Naive thymus-derived CD4-positive, alpha-beta T cell (primary cell): ENCODE measurements at regions of chr6 and their contacts with region 1.

Region 1: DNA sequence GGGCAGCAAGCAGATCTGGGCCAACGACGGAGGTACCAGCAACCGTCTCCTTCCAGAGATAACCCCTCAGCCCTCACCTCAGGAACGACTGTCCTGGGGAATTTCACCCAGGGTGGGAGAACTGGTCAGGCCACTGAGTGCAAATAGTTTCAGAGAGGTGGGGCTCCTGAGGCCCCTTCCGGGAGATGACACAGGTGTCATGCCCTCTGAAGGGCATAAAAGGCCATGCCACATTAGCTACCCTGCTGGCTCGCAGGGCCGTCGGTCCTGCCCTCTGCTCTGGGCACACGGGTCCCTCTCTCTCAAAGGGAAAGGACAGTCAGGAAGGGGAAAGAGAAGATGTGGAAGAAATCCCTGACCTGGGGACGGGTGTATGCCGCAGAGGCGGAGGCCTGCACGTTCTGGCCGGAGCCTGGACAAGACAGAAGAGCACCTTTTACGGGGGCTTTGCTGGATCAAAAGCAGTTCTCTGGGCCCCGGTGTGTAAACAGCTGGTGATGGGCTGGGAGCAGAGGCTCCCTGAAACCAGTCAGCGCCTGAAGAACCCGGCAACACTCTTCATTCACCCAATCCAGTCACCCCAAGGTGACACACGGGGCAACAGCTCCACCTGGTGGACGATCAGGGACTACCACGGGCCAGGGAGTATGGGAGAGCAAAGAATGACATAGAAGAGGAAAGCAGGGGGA is 6.4 kb upstream of the TAF8 start:
- DNase-seq: peak; percentile 85 to 95 (median 91)
- ATAC-seq: peak; percentile 67
- H3K4me3 ChIP-seq: peak overlapping the region; percentile 59
- H3K4me3 Mint-ChIP-seq: peak overlapping the region; percentile 84 to 99 (median 95)
- H3K27ac ChIP-seq: peak overlapping the region; percentile 76
- H3K27ac Mint-ChIP-seq: peak overlapping the region; percentile 73 to 98 (median 94)
- H3K4me1 ChIP-seq: peaks cover 55 to 64% of the 10 kb centered on the region in 2 donors
- H3K4me1 Mint-ChIP-seq: peaks cover 53 to 89% (median 64%) of the 10 kb centered on the region in 7 donors
- H3K27me3 ChIP-seq: no peaks in the 10 kb centered on the region
- H3K27me3 Mint-ChIP-seq: no peaks in the 10 kb centered on the region

Region 2: GRCh38 chr6:40210628-40211056 is 1833.3 kb before region 1 on chr6:
- CTCF ChIA-PET with region 1: no interaction called
- POLR2A ChIA-PET with region 1: no interaction called
- intact Hi-C with region 1: no loop called
- DNase-seq: no peak
- ATAC-seq: no peak
- H3K4me3 ChIP-seq: no peak overlapping the region
- H3K4me3 Mint-ChIP-seq: no peak overlapping the region
- H3K27ac ChIP-seq: no peak overlapping the region
- H3K27ac Mint-ChIP-seq: no peak overlapping the region
- H3K4me1 ChIP-seq: no peaks in the 10 kb centered on the region
- H3K4me1 Mint-ChIP-seq: no peaks in the 10 kb centered on the region
- H3K27me3 ChIP-seq: peaks cover 0 to 5% of the 10 kb centered on the region in 2 donors
- H3K27me3 Mint-ChIP-seq: peaks cover 0 to 44% (median 28%) of the 10 kb centered on the region in 5 donors

Region 3: DNA sequence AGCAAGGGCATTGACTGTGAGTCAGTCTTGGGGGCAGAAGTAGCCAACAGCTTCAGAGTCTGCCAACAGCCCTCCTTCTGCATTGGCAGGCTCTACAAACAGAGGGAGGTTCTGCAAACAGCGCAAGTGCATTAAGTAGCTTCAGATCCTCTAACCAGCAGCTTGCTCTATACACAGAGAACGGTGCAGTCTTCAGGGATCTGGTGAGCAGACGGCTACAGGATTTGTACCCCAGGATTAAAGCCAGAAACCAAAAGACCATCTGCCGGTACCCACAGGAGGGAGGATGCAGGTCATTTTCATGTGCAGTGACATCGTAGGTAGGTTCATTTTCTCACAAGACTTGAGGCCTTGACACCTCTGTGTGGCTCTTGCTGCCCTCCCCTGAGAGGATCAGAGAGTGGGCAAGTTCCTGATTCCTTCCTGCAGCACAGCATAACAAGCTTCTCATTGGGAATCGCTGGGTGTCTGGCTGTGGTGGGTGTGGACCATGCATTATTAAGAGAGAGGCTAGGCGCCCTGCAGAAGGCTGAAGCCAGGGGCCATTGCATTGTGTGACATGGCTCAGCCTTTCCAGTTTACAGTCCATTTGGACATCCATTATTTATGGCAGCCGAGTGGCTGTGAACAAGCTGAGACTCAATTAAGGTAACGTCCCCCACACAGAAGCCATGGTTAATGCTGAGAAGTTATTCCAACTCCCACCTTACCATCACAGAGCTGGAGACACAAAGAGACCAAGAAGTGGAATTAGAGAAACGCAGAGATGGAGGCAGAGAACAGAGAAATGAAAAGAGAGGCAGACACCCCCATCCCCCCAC is 1706.8 kb before region 1 on chr6:
- CTCF ChIA-PET with region 1: no interaction called
- POLR2A ChIA-PET with region 1: no interaction called
- intact Hi-C with region 1: no loop called
- DNase-seq: no peak
- ATAC-seq: no peak
- H3K4me3 ChIP-seq: no peak overlapping the region
- H3K4me3 Mint-ChIP-seq: no peak overlapping the region
- H3K27ac ChIP-seq: no peak overlapping the region
- H3K27ac Mint-ChIP-seq: no peak overlapping the region
- H3K4me1 ChIP-seq: no peaks in the 10 kb centered on the region
- H3K4me1 Mint-ChIP-seq: peaks cover 0 to 30% (median 0%) of the 10 kb centered on the region in 7 donors
- H3K27me3 ChIP-seq: no peaks in the 10 kb centered on the region
- H3K27me3 Mint-ChIP-seq: peaks cover 0 to 65% (median 23%) of the 10 kb centered on the region in 5 donors

Region 4: DNA sequence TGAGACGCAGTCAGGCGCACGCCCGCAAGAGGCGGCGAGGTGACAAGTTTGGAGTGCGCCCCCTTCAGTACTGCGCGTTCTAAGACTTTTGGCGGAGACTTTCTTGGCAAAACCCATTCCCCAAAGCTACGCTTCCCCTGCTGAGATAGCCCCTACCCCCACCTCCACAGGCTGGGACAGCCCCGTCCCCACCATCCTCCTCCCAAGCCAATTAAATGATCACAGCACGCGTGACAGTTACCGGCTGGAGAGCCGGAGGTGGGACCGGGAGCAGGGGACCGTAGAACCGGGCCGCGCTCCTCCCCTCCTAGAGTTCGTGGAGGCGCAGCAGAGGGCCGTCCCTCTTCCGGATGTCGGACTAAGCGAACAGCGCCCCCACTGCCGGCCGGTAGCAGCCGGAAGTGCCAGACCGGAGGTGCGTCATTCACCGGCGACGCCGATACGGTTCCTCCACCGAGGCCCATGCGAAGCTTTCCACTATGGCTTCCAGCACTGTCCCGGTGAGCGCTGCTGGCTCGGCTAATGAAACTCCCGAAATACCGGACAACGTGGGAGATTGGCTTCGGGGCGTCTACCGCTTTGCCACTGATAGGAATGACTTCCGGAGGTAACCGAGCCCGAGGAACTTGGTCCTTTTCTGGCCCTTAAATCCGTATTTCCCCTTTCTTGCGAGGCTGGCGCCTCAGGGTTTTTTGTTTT is 256.6 kb before region 1 on chr6 and contains the start of gene TOMM6:
- CTCF ChIA-PET with region 1: interaction called, 49 read pairs
- POLR2A ChIA-PET with region 1: interaction called, 79 read pairs
- intact Hi-C with region 1: loop called (anchors 1 kb)
- DNase-seq: peak; percentile 87 to 96 (median 94)
- ATAC-seq: peak; percentile 88
- H3K4me3 ChIP-seq: peak within 1 kb of the TSS; percentile 97
- H3K4me3 Mint-ChIP-seq: peak within 1 kb of the TSS; percentile 91 to 99 (median 97)
- H3K27ac ChIP-seq: peak within 1 kb of the TSS; percentile 89
- H3K27ac Mint-ChIP-seq: peak within 1 kb of the TSS; percentile 95 to 99 (median 98)
- H3K4me1 ChIP-seq: peaks cover 6 to 9% of the 10 kb centered on the region in 2 donors
- H3K4me1 Mint-ChIP-seq: peaks cover 8 to 29% (median 17%) of the 10 kb centered on the region in 7 donors
- H3K27me3 ChIP-seq: no peaks in the 10 kb centered on the region
- H3K27me3 Mint-ChIP-seq: peaks cover 0 to 14% (median 0%) of the 10 kb centered on the region in 5 donors
- total RNA-seq, gene TOMM6: 114 to 193 (median 128) TPM

Region 5: GRCh38 chr6:41901882-41902519 is 141.9 kb before region 1 on chr6:
- CTCF ChIA-PET with region 1: interaction called, 5 read pairs
- POLR2A ChIA-PET with region 1: interaction called, 5 read pairs
- intact Hi-C with region 1: loop called (anchors 1 kb)
- DNase-seq: peak in 8 of 9 donors; percentile 42 to 66 (median 52)
- ATAC-seq: peak; percentile 78
- H3K4me3 ChIP-seq: no peak overlapping the region
- H3K4me3 Mint-ChIP-seq: no peak overlapping the region
- H3K27ac ChIP-seq: no peak overlapping the region
- H3K27ac Mint-ChIP-seq: peak overlapping the region in 7 of 9 donors; percentile 5 to 61 (median 14)
- H3K4me1 ChIP-seq: peaks cover 0 to 7% of the 10 kb centered on the region in 2 donors
- H3K4me1 Mint-ChIP-seq: peaks cover 8 to 27% (median 23%) of the 10 kb centered on the region in 7 donors
- H3K27me3 ChIP-seq: no peaks in the 10 kb centered on the region
- H3K27me3 Mint-ChIP-seq: no peaks in the 10 kb centered on the region

Region 6: DNA sequence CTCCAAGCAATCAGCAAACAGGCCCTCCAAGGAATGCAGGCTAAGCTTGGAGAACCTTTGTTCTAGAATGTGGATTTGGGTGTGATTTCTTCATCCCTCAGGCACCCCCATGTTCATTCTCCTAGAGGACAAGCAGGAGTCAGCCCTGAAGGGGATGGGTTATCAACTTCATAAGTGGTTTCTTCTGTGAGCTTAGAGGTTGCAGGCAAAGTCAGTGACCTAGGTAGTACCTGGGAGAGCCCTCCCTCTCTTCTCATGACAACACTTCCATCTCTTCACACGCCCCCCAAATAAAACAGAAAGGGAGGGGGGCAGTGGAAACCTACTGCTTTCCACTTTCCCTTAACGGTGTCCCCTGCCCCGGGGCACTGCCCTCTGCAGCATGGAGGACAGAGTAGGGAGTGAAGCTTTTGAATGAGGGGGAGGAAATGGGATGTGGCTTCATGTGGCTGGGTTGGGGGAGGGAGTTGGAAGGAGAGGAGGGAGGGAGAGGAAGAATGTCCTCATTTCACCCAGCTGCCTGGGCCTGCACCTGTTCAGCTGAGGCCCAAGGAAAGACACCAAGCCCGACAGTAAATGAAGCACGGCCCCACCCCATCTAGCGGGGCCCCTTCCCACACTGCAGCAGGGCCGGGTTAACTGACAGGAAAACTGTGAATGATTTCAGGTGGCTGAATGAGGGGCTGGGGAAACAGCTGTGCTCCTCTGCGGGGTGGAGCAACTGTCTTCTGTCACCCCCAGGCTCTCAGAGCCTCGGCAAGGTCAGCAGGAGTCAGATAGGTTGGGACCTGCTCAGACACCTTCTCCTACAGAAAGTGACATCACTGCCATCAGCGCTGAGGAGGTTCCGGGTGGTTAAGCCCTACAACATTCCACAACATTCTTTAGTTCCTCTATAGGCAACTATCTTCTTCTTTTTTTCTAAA is 33.7 kb before region 1 on chr6:
- CTCF ChIA-PET with region 1: interaction called, 8 read pairs
- POLR2A ChIA-PET with region 1: interaction called, 10 read pairs
- intact Hi-C with region 1: loop called (anchors 1 to 5 kb)
- DNase-seq: peak in 3 of 9 donors; percentile 21 to 35 (median 30)
- ATAC-seq: peak; percentile 53
- H3K4me3 ChIP-seq: no peak overlapping the region
- H3K4me3 Mint-ChIP-seq: peak overlapping the region; percentile 54 to 84 (median 72)
- H3K27ac ChIP-seq: peak overlapping the region; percentile 65
- H3K27ac Mint-ChIP-seq: peak overlapping the region; percentile 73 to 93 (median 88)
- H3K4me1 ChIP-seq: peaks cover 37 to 56% of the 10 kb centered on the region in 2 donors
- H3K4me1 Mint-ChIP-seq: peaks cover 71 to 90% (median 83%) of the 10 kb centered on the region in 7 donors
- H3K27me3 ChIP-seq: no peaks in the 10 kb centered on the region
- H3K27me3 Mint-ChIP-seq: no peaks in the 10 kb centered on the region

Region 7: DNA sequence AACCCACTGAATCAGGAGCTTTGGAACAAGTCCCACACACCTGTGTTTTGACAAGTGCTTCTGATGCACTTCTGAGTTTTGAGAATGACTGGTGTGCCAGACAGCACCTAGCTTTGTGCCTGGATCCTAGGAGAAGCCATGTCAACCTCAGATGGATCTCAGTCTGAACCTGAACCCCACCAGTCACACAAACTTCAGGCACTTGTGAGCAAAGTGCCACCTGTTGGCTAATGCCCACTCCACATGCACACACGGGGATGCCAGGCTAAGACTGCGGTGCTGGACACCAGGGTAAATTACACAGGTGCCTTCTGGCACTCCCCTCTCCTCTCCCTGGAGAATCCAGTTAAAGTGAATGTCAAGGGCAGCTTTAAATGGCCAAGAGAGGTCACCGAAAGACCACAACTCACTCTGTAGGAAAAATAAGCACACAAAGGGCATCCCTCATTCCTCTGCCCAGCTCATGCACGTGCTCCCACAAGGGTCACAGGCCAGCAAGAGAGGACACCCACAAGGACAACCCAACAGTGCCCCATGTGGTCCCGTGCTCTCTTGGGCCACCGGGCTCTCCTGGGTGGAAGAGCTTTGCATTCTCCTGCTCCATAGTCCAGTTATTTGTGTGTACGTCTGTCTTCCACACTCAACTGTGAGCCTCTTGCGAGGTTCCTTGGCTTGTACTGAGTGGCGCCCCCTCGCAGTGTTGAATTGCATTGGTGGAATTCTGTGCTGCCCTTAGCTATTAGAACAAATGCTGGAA is 52.0 kb after region 1 on chr6:
- CTCF ChIA-PET with region 1: no interaction called
- POLR2A ChIA-PET with region 1: no interaction called
- intact Hi-C with region 1: no loop called
- DNase-seq: no peak
- ATAC-seq: no peak
- H3K4me3 ChIP-seq: no peak overlapping the region
- H3K4me3 Mint-ChIP-seq: no peak overlapping the region
- H3K27ac ChIP-seq: no peak overlapping the region
- H3K27ac Mint-ChIP-seq: no peak overlapping the region
- H3K4me1 ChIP-seq: no peaks in the 10 kb centered on the region
- H3K4me1 Mint-ChIP-seq: peaks cover 0 to 18% (median 0%) of the 10 kb centered on the region in 7 donors
- H3K27me3 ChIP-seq: no peaks in the 10 kb centered on the region
- H3K27me3 Mint-ChIP-seq: no peaks in the 10 kb centered on the region

Region 8: DNA sequence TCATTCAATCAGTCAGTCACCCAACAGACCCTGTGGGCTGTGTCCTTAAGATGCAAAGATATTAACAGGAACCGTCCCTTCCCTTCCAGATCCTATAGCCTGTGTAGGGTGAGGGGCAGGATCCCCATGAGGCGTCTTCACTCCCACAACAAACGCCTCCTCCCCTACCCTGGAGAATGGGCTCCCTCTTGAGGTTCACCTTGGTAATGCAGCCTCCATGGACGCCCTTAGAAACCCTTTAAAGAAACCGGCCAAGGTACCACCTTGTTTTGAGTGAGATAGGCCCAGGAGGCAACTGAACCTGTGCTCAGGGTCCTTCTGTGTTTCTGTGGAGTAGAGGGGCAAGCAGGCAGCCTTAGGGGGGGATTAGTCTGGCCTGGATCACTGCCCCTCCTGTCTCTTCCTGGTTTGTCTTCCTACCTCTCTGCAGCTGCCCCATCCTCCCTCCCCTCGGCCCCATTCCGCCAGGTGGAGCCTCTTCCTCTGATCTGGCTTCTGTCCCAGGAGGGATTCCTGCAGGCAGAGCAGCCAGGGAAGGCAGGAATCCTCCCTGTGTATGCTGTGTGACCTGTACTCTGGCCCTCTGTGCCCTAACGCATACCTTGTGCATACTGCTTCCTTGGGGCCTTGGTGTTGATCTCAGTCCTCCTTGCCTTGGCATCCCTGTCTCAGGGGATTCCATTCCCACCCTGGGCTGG is 122.7 kb after region 1 on chr6:
- CTCF ChIA-PET with region 1: interaction called, 4 read pairs
- POLR2A ChIA-PET with region 1: no interaction called
- intact Hi-C with region 1: loop called in 1 of 2 experiments (anchors 1 kb)
- DNase-seq: peak; percentile 48 to 83 (median 71)
- ATAC-seq: peak; percentile 95
- H3K4me3 ChIP-seq: no peak overlapping the region
- H3K4me3 Mint-ChIP-seq: no peak overlapping the region
- H3K27ac ChIP-seq: no peak overlapping the region
- H3K27ac Mint-ChIP-seq: peak overlapping the region in 2 of 9 donors; percentile 10 to 51
- H3K4me1 ChIP-seq: no peaks in the 10 kb centered on the region
- H3K4me1 Mint-ChIP-seq: peaks cover 0 to 10% (median 5%) of the 10 kb centered on the region in 7 donors
- H3K27me3 ChIP-seq: no peaks in the 10 kb centered on the region
- H3K27me3 Mint-ChIP-seq: peaks cover 0 to 6% (median 3%) of the 10 kb centered on the region in 5 donors